Breast epithelium (tissue), 4 donors: ENCODE measurements at regions of chr3 and their contacts with region 1.

Region 1: GRCh38 chr3:77618686-77619085 is 578.8 kb downstream of the ROBO2 start:
- DNase-seq: no peak
- H3K4me3 ChIP-seq: no peak overlapping the region
- H3K27ac ChIP-seq: no peak overlapping the region
- H3K4me1 ChIP-seq: no peaks in the 10 kb centered on the region
- H3K27me3 ChIP-seq: no peaks in the 10 kb centered on the region
- CTCF ChIP-seq: no peak
- POLR2A ChIP-seq: no peak

Region 2: GRCh38 chr3:77667901-77668300 is 49.2 kb after region 1 on chr3:
- intact Hi-C with region 1: loop called (anchors 2 kb)
- DNase-seq: no peak
- H3K4me3 ChIP-seq: no peak overlapping the region
- H3K27ac ChIP-seq: no peak overlapping the region
- H3K4me1 ChIP-seq: no peaks in the 10 kb centered on the region
- H3K27me3 ChIP-seq: no peaks in the 10 kb centered on the region
- CTCF ChIP-seq: no peak
- POLR2A ChIP-seq: no peak

Region 3: DNA sequence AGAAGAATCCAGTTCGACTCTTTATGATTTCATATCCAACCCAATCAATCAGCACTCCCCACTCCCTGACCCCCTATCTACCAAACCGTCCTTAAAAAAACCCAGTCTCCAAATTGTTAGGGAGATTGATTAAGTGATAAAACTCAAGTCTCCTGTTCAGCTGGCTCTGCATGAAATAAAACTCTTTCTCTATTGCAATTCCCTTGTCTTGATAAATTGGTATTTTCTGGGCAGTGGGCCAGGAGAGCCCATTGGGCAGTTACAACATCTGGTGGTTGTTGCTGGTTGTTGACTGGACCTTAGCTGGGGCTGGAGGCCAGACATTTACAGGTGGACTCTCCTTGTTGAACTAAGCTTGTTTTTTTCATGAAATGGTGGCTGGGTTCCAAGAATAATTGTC is 63.5 kb after region 1 on chr3:
- intact Hi-C with region 1: no loop called
- DNase-seq: no peak
- H3K4me3 ChIP-seq: no peak overlapping the region
- H3K27ac ChIP-seq: no peak overlapping the region
- H3K4me1 ChIP-seq: no peaks in the 10 kb centered on the region
- H3K27me3 ChIP-seq: no peaks in the 10 kb centered on the region
- CTCF ChIP-seq: no peak
- POLR2A ChIP-seq: no peak

Region 4: GRCh38 chr3:77707281-77707680 is 88.6 kb after region 1 on chr3:
- intact Hi-C with region 1: no loop called
- DNase-seq: no peak
- H3K4me3 ChIP-seq: no peak overlapping the region
- H3K27ac ChIP-seq: no peak overlapping the region
- H3K4me1 ChIP-seq: no peaks in the 10 kb centered on the region
- H3K27me3 ChIP-seq: no peaks in the 10 kb centered on the region
- CTCF ChIP-seq: no peak
- POLR2A ChIP-seq: no peak